AG04449 (cell line): ENCODE measurements at regions of chr2 and their contacts with region 1.

Region 1: DNA sequence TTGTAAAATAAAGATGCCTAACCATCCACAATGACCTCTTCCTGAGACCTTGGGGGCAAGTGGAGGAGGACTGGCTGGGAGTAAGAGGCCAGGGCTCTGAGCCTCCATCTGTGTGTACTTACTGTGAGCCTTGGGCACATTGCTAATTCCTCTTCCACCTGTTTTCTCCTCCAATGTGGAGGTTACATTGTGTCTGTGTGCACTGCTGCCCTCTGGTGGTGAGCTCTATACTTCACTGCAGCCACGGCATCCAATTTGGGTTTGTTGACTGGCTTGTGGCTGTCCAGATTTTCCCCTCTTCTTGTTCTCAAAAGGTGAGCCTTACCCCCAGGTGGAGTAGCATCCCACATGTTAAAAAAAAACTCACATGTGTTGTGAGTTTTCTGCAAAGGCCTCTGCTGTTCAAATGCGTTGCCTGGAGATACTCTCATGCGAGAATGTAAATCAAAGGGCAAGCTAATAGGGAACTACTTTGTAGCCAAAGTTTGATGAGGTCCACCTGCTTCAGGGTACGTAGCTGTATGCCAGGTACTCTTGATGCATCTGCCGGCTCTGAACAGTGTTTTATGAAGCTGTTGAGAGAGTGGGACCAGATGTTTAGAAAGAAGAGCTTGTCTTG is 80.8 kb downstream of the APOB start:
- DNase-seq: no peak
- H3K4me3 ChIP-seq: no peak overlapping the region
- CTCF ChIP-seq: peak; percentile 89

Region 2: GRCh38 chr2:20670315-20671035 is 292.6 kb before region 1 on chr2:
- CTCF ChIA-PET with region 1: interaction called, 382 read pairs
- POLR2A ChIA-PET with region 1: no interaction called
- DNase-seq: no peak
- H3K4me3 ChIP-seq: no peak overlapping the region
- CTCF ChIP-seq: no peak

Region 3: GRCh38 chr2:20675701-20676352 is 287.2 kb before region 1 on chr2:
- CTCF ChIA-PET with region 1: interaction called, 31 read pairs
- POLR2A ChIA-PET with region 1: no interaction called
- DNase-seq: no peak
- H3K4me3 ChIP-seq: no peak overlapping the region
- CTCF ChIP-seq: no peak

Region 4: DNA sequence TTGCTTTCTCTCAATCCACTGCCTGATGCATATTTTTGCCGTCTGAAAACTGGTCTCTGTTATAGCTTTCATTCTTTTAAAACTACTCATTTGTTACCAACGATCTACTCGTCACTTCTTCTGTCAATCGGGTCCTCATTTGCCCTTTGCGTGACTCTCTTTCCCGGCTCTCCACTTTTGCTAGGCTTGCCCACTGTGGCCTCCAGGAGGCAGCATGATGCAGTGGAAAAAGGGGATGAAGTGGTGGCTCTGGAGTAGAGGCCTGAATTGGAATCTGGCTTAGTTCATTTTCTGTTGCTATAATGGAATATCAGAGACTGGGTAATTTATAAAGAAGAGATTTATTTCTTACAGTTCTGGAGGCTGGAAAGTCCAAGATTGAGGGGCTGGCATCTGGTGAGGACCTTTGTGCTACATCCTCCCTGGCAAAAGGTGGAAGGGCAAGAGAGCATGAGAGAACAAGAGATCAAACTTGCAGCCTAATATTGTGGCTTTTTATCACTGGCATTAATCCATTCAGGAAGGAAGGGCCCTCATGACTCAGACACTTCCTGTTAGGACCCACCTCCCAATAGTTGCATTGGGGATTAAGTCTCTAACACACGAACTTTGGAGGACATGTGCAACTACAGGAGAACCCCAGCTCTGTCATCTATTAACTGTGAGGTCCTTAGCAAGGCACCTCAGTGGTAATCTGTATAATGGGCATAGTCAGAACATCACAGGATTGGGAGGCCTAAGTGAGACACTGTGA is 280.7 kb before region 1 on chr2:
- CTCF ChIA-PET with region 1: interaction called, 31 read pairs
- POLR2A ChIA-PET with region 1: no interaction called
- DNase-seq: no peak
- H3K4me3 ChIP-seq: no peak overlapping the region
- CTCF ChIP-seq: peak; percentile 71

Region 5: GRCh38 chr2:20781656-20782265 is 181.3 kb before region 1 on chr2:
- CTCF ChIA-PET with region 1: interaction called, 135 read pairs
- POLR2A ChIA-PET with region 1: no interaction called
- DNase-seq: no peak
- H3K4me3 ChIP-seq: no peak overlapping the region
- CTCF ChIP-seq: peak; percentile 52

Region 6: GRCh38 chr2:20916604-20917286 is 46.3 kb before region 1 on chr2:
- CTCF ChIA-PET with region 1: interaction called, 11 read pairs
- POLR2A ChIA-PET with region 1: no interaction called
- DNase-seq: no peak
- H3K4me3 ChIP-seq: no peak overlapping the region
- CTCF ChIP-seq: no peak

Region 7: DNA sequence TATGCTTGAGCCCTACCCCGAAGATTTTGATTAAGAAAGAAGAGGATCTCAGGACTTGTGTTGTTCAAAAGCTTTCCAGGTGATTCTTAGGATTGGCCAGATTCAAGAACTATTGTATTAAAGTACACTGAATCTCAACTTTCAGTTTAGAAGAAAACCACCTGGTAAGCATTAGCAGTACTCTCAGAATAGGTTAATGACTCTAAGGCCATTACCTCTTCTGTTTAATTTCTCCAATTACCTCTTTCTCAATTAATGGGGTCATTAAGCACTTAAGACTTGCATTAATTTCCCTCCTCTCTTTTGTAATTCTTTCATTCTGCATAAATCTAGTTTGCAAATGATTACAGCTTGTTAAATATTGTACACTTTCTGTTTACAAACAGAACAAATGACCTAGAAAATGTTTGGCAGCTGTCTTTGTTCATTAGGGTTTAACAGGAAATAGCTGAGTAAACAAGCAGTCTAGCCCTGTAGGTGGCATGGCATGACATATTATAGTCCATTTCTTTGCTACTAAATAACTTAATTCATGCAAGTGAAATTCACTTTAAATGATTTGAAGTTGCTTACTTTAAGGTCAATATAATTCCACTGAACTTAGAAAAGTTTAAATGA is 140.3 kb after region 1 on chr2:
- CTCF ChIA-PET with region 1: no interaction called
- POLR2A ChIA-PET with region 1: no interaction called
- DNase-seq: no peak
- H3K4me3 ChIP-seq: no peak overlapping the region
- CTCF ChIP-seq: no peak